ENCODE measurements at regions of chr19 and their contacts with region 1.

Region 1: GRCh38 chr19:3185482-3186376 is at the start of gene NCLN:
- DNase-seq: peak; percentile 98
- total RNA-seq, gene NCLN: 19.0 TPM

Region 2: GRCh38 chr19:3434712-3435553 is 249.2 kb after region 1 on chr19:
- intact Hi-C with region 1: loop called (anchors 10 kb)
- DNase-seq: peak; percentile 98